ENCODE measurements at regions of chr16 and their contacts with region 1.

Region 1: DNA sequence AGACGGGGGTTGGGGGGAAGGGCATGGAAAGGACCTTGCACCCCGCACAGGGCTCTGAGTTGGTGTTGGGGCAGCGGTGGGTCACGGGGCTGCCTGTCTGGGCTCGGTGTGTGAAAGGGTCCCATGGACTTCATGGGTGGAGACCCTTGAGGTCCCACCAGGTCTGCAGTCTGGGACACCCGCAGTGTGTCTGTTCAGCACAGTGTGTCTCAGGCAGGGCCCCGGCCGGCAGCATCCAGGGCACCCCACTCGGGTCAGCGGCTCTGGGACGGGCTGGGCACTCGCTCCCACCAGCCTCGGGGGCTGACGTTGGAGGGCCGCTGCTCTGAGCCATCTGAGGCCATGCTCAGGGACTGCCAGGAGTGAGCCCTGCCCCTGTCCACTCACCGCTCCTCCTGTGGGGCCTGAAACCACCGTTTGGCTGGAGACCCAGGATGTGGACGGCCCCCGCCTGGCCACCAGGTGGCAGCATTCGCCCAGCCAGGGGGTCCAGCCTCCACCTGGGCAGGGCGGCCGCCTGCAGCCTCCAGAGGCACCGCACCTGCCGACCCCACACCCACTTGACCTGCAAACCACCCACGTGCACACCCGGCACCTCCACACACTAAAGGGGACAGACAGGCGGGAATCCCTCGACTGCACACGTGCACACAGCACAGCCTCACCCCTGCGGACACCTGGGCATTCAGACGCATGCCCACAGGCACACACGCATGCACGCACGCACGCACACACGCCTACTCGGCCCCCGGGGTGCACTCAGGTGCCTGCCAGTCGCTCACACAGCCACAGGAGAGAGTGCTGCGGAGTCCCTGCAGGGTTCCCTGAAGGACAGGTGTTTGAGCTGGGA is 10.1 kb upstream of the ZFPM1 start:
- DNase-seq: peak; percentile 61 to 91 (median 80)
- ATAC-seq: peak; percentile 88
- H3K4me3 ChIP-seq: no peak overlapping the region
- H3K4me3 Mint-ChIP-seq: peak overlapping the region in 2 of 10 donors; percentile 43 to 68
- H3K27ac ChIP-seq: no peak overlapping the region
- H3K27ac Mint-ChIP-seq: peak overlapping the region in 1 of 9 donors; percentile 43
- H3K4me1 ChIP-seq: peaks cover 4% of the 10 kb centered on the region in 2 donors
- H3K4me1 Mint-ChIP-seq: peaks cover 0 to 3% (median 0%) of the 10 kb centered on the region in 7 donors
- H3K27me3 ChIP-seq: no peaks in the 10 kb centered on the region
- H3K27me3 Mint-ChIP-seq: peaks cover 0 to 6% (median 0%) of the 10 kb centered on the region in 5 donors

Region 2: GRCh38 chr16:88405216-88406060 is 37.5 kb before region 1 on chr16:
- CTCF ChIA-PET with region 1: no interaction called
- POLR2A ChIA-PET with region 1: no interaction called
- intact Hi-C with region 1: no loop called
- DNase-seq: no peak
- ATAC-seq: no peak
- H3K4me3 ChIP-seq: no peak overlapping the region
- H3K4me3 Mint-ChIP-seq: no peak overlapping the region
- H3K27ac ChIP-seq: no peak overlapping the region
- H3K27ac Mint-ChIP-seq: no peak overlapping the region
- H3K4me1 ChIP-seq: no peaks in the 10 kb centered on the region
- H3K4me1 Mint-ChIP-seq: peaks cover 4 to 15% (median 6%) of the 10 kb centered on the region in 7 donors
- H3K27me3 ChIP-seq: no peaks in the 10 kb centered on the region
- H3K27me3 Mint-ChIP-seq: peaks cover 0 to 3% (median 0%) of the 10 kb centered on the region in 5 donors

Region 3: DNA sequence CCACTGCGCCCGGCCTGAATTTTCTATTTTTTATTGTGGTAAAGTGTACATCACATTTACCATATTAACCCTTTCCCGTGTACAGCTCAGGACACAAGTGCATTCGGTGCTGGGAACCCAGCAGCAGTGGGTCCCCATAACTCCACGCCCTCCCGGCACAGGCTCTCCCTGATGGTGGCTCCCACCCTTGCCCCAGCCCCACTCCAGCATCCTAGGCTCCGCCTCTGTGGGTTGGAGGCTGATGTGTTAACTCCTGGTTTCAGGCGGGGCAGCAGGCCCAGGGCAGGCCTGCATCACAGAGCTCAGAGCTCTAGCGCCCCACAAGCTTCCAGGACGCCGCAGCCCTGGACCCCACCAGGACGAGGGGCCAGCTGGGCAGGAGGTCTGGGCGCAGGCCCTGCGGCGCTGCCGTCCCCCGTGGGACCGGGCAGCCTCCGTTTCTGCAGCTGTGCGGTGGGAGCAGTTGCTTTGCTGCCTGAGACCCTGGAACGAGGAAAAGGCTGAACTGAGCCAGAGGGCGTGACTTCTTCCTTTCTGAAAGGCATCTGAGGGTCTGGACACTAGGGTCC is 29.8 kb after region 1 on chr16:
- CTCF ChIA-PET with region 1: no interaction called
- POLR2A ChIA-PET with region 1: no interaction called
- intact Hi-C with region 1: no loop called
- DNase-seq: no peak
- ATAC-seq: no peak
- H3K4me3 ChIP-seq: no peak overlapping the region
- H3K4me3 Mint-ChIP-seq: peak overlapping the region in 6 of 10 donors; percentile 11 to 60 (median 34)
- H3K27ac ChIP-seq: peak overlapping the region; percentile 81
- H3K27ac Mint-ChIP-seq: peak overlapping the region in 8 of 9 donors; percentile 51 to 99 (median 74)
- H3K4me1 ChIP-seq: peaks cover 38 to 49% of the 10 kb centered on the region in 2 donors
- H3K4me1 Mint-ChIP-seq: peaks cover 22 to 67% (median 44%) of the 10 kb centered on the region in 7 donors
- H3K27me3 ChIP-seq: no peaks in the 10 kb centered on the region
- H3K27me3 Mint-ChIP-seq: peaks cover 0 to 4% (median 0%) of the 10 kb centered on the region in 5 donors

Region 4: GRCh38 chr16:88505405-88506082 is 62.6 kb after region 1 on chr16:
- CTCF ChIA-PET with region 1: interaction called, 3 read pairs
- POLR2A ChIA-PET with region 1: no interaction called
- intact Hi-C with region 1: loop called in 1 of 2 experiments (anchors 1 kb)
- DNase-seq: peak; percentile 46 to 83 (median 75)
- ATAC-seq: peak; percentile 85
- H3K4me3 ChIP-seq: no peak overlapping the region
- H3K4me3 Mint-ChIP-seq: no peak overlapping the region
- H3K27ac ChIP-seq: peak overlapping the region; percentile 14
- H3K27ac Mint-ChIP-seq: peak overlapping the region in 3 of 9 donors; percentile 45 to 85 (median 46)
- H3K4me1 ChIP-seq: peaks cover 0 to 3% of the 10 kb centered on the region in 2 donors
- H3K4me1 Mint-ChIP-seq: peaks cover 0 to 18% (median 6%) of the 10 kb centered on the region in 7 donors
- H3K27me3 ChIP-seq: no peaks in the 10 kb centered on the region
- H3K27me3 Mint-ChIP-seq: no peaks in the 10 kb centered on the region

Region 5: DNA sequence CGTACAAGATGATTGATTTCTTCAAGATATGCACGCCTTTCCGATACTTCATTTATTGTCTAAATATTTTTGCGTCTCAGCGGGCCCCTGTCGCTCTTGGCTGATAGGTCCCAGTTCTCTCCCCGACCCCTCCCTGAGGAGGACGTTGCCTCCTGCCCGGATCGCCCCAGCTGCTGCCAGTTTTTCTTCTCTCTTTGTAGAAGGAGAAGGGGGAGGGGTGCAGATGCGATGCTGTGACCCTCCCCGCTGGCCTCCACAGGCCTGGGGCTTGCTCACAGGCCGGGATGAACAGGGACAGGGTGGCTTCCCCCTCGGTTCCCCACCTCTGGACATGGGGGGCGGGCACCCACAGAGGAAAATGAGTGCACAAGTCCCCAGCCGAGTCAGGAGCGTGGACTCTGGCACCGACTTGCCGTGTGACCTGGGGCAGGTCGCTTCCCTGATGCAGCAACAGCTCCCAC is 73.7 kb after region 1 on chr16:
- CTCF ChIA-PET with region 1: no interaction called
- POLR2A ChIA-PET with region 1: no interaction called
- intact Hi-C with region 1: no loop called
- DNase-seq: no peak
- ATAC-seq: no peak
- H3K4me3 ChIP-seq: no peak overlapping the region
- H3K4me3 Mint-ChIP-seq: no peak overlapping the region
- H3K27ac ChIP-seq: no peak overlapping the region
- H3K27ac Mint-ChIP-seq: peak overlapping the region in 1 of 9 donors; percentile 43
- H3K4me1 ChIP-seq: no peaks in the 10 kb centered on the region
- H3K4me1 Mint-ChIP-seq: peaks cover 0 to 10% (median 0%) of the 10 kb centered on the region in 7 donors
- H3K27me3 ChIP-seq: no peaks in the 10 kb centered on the region
- H3K27me3 Mint-ChIP-seq: no peaks in the 10 kb centered on the region

Region 6: DNA sequence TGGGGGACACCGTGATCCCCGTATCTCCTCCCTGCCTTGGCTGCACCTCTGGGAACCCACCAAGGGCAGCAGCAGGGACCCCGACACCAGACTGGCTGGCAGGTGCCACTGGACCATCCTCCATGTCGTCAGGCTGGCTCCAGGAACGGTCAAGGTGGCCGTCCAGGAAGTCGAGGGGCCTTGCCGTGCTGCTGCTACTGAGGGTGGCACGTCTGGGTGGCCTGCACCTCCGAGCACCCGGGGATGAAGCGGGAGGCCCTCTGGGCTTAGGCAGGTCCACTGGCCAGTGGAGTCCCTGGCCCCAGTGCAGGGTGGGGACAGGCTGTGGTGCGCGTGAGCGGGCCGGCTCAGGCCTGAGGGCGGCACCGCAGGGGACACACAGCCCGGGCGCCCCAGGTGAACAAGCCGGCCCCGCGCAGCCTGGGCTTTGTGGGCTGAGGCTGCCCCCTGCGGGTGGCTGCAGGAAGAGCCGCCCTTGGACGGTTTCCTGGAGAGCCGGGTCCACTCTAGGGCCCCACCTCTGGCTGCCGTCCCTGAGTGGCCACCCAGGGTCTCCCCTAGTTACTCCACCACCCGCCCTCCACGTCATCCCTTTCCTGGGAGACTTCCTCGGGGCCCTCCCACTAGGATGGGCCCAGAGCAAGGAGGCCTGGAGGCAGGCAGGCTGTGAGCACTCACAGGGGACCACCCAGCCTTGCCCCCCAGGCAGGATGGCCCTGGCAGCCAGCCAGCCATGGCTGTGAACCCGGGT is 84.4 kb after region 1 on chr16:
- CTCF ChIA-PET with region 1: interaction called, 3 read pairs
- POLR2A ChIA-PET with region 1: no interaction called
- intact Hi-C with region 1: loop called (anchors 1 kb)
- DNase-seq: peak in 8 of 9 donors; percentile 49 to 78 (median 62)
- ATAC-seq: peak; percentile 75
- H3K4me3 ChIP-seq: no peak overlapping the region
- H3K4me3 Mint-ChIP-seq: no peak overlapping the region
- H3K27ac ChIP-seq: no peak overlapping the region
- H3K27ac Mint-ChIP-seq: no peak overlapping the region
- H3K4me1 ChIP-seq: peaks cover 0 to 7% of the 10 kb centered on the region in 2 donors
- H3K4me1 Mint-ChIP-seq: peaks cover 0 to 13% (median 5%) of the 10 kb centered on the region in 7 donors
- H3K27me3 ChIP-seq: no peaks in the 10 kb centered on the region
- H3K27me3 Mint-ChIP-seq: no peaks in the 10 kb centered on the region

Region 7: DNA sequence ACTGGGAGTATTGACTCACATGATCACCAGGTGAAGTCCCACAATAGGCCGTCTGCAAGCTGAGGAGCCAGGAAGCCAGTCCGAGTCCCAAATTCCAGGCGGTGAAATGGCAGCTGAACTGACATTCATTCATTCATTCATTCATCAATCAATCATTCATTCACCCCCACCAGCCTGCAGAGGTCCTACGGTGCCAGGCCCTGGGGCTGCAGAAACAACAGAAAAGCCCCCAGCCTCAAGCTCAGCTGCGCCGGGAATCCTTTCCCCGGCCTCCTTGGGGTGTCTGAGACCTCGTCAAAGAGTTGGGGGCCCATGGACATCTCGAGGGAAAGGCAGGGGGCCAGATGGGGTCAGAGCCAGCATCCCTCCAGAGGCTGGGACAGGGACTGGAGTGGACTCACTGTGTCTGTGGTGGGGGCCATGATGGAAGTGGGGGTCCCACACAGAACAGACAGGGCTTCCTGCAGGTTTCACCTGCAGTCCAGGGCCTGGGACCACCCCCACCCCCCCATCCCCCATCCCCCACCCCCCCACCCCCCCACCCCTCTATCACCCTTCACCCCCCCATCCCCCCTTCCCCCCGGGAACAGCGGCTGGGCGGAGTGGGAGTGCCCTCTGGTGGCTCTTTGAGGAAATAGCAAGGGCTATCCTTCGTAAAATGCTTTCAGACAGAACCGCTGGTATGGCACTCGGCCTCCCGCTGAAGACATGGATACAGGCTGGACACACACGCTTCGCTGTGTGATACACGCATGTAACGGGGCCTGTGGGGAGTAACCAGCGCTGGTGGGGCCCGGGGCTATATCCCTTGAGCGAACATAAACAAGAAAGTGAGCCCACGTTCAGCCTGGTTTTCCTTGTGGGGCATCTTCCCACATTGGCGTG is 118.8 kb after region 1 on chr16:
- CTCF ChIA-PET with region 1: interaction called, 3 read pairs
- POLR2A ChIA-PET with region 1: no interaction called
- intact Hi-C with region 1: loop called (anchors 1 kb)
- DNase-seq: peak; percentile 27 to 58 (median 49)
- ATAC-seq: peak; percentile 92
- H3K4me3 ChIP-seq: no peak overlapping the region
- H3K4me3 Mint-ChIP-seq: no peak overlapping the region
- H3K27ac ChIP-seq: no peak overlapping the region
- H3K27ac Mint-ChIP-seq: peak overlapping the region in 2 of 9 donors; percentile 54 to 55
- H3K4me1 ChIP-seq: peaks cover 4% of the 10 kb centered on the region in 2 donors
- H3K4me1 Mint-ChIP-seq: peaks cover 0 to 4% (median 3%) of the 10 kb centered on the region in 7 donors
- H3K27me3 ChIP-seq: no peaks in the 10 kb centered on the region
- H3K27me3 Mint-ChIP-seq: peaks cover 0 to 18% (median 4%) of the 10 kb centered on the region in 5 donors

Measured in naive thymus-derived CD4-positive, alpha-beta T cell (primary cell).